Dendritic cell treated with granulocyte-macrophage colony-stimulating factor and Interleukin-4, amounts not matched to agents 40 ng/mL and 50 ng/mL, for 4 days (primary cell): ENCODE measurements at regions of chr11 and their contacts with region 1.

Region 1: DNA sequence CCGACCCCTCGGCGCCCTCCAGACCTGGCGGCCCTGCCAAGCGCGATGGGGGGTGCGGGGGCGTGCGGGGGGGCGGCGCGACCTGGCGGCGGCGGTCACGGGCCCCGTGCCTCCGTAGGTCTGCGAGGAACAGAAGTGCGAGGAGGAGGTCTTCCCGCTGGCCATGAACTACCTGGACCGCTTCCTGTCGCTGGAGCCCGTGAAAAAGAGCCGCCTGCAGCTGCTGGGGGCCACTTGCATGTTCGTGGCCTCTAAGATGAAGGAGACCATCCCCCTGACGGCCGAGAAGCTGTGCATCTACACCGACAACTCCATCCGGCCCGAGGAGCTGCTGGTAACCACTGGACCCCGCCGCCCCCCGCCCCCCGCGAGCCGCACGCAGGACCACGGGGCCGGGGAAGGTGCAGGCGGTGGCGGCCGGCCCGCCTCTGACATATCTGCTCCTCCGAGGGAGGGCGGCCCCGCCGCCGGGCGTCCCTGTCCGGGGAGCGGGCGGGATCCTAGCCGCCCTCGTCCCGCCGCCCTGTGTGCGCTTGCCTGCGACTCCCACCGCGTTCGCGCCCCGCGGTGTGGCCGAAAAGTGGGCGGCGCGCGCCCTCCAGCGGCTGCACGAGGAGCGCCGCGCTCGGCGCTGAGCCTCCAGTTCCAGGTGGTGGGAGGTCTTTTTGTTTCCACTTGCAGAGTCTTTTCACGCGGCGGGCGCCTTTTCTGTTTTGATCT is 2.1 kb downstream of the CCND1 start:
- H3K4me3 Mint-ChIP-seq: peak overlapping the region; percentile 75
- H3K27ac Mint-ChIP-seq: no peak overlapping the region
- H3K4me1 Mint-ChIP-seq: peaks cover 31% of the 10 kb centered on the region
- H3K27me3 Mint-ChIP-seq: peaks cover 72% of the 10 kb centered on the region

Region 2: DNA sequence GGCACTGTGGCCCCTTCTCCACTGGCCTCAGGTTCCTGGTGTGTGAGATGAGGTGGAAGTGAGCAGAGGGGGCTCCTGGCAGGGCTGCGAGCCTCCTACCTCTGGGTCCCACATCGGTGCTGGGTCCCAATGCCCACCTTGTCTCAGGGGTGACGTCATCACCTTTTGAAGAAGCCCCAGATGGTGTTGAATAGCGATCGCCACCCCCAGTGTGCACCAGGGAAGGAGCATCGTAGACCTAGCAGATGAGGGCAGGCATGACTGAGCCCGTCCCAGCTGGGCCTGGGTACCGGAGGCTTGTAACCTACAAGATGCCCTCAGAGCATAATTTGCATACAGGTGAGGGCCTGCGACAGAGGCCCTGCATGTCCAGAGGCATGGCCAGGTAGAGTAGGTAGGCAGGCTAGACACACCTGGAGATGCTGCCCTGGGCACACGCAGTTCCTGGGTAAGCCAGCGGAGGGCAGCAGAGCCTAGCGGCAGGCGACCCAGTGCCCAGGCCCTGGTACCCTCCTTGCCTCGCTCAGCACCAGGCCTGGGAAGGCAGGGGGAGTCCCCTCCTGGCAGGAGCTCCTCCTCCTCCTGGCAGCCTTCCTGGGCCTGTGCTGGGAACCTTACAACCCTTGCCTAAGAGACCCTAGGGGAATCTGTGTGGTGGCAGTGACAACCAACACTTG is 541.8 kb before region 1 on chr11:
- intact Hi-C with region 1: loop called (anchors 1 kb)
- H3K4me3 Mint-ChIP-seq: no peak overlapping the region
- H3K27ac Mint-ChIP-seq: no peak overlapping the region
- H3K4me1 Mint-ChIP-seq: peaks cover 9% of the 10 kb centered on the region
- H3K27me3 Mint-ChIP-seq: peaks cover 40% of the 10 kb centered on the region

Region 3: DNA sequence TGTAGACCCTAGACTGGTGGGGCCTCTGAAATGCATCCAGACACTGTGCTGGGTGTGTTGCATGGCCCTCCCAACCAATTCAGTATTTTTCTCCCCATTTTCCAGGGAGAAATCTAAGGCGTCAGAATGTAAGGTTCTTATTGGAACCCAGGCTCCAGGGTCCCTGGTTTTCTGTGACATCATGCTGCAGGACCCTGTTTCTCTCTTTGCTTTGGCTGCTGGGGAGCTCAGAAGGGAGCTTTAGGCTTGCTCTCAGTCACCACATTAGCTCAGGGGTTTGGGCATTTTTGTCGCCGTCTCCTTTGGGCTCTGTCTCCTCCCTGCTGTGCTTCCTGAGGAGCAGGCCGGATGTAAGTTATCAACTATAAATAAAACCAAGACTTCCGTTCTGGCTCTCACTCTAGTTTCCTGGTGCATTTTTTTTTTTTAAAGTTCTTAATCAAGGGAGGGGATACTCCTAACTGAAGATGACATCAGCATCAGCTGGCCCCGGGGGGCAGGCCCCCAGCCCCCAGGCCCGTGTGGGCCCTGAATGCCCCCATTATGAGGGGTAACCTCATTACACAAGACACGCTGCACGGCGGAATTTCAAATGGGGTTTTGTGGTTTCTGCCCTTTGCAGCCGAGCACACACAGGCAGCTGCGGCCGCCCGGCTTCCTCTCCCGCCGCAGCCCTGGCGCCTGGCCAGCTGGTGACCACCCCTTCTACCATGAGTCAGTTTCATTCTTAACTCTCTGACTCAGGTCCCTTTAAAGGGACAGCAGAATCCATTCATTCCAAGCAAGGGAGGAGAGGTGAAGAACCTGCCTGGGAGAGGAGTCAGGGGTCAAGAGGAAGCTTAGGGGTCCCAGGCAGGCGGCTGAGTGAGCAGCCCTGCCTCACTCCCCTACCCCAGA is 345.9 kb before region 1 on chr11:
- intact Hi-C with region 1: loop called (anchors 1 kb)
- H3K4me3 Mint-ChIP-seq: peak overlapping the region; percentile 71
- H3K27ac Mint-ChIP-seq: peak overlapping the region; percentile 86
- H3K4me1 Mint-ChIP-seq: peaks cover 79% of the 10 kb centered on the region
- H3K27me3 Mint-ChIP-seq: peaks cover 43% of the 10 kb centered on the region

Region 4: GRCh38 chr11:69443138-69443967 is 199.7 kb before region 1 on chr11:
- intact Hi-C with region 1: loop called (anchors 10 kb)
- H3K4me3 Mint-ChIP-seq: peak overlapping the region; percentile 57
- H3K27ac Mint-ChIP-seq: peak overlapping the region; percentile 87
- H3K4me1 Mint-ChIP-seq: peaks cover 63% of the 10 kb centered on the region
- H3K27me3 Mint-ChIP-seq: peaks cover 68% of the 10 kb centered on the region

Region 5: DNA sequence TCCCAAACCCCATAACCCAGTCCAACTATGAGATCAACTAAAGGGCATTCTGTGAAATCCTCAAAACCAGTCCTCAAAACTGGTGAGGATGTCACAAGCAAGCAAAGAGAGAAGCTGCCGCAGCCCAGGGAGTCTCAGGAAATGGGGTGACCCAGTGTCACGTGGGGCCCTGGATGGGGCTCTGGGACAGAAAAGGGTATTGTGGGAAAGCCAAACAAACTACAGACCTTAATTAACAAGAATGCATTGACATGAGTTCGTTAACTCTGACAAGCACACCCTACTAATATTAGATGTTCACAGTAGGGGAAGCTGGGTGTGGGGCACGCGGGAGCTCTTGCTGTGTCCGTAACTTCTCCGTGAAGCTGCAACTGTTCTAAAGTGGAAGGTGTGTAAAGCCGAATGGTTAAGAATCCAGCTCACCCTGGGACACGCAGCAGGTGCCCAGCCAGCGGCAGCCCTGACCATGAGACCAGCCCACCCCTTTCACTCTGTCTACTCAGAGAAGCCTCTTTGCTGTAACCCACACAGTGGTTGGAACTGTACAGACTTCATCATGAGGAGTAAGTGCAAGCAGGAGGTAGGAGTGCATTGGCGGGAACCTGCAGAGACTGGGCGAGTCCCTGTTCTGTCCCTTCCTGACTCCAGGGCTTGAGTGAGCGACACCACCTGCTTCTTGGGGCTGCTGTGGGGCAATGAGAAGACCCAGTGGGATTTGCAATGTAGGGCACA is 143.7 kb before region 1 on chr11:
- intact Hi-C with region 1: no loop called
- H3K4me3 Mint-ChIP-seq: no peak overlapping the region
- H3K27ac Mint-ChIP-seq: no peak overlapping the region
- H3K4me1 Mint-ChIP-seq: peaks cover 11% of the 10 kb centered on the region
- H3K27me3 Mint-ChIP-seq: peaks cover 30% of the 10 kb centered on the region

Region 6: GRCh38 chr11:69540118-69540502 is 103.0 kb before region 1 on chr11:
- intact Hi-C with region 1: loop called (anchors 10 kb)
- H3K4me3 Mint-ChIP-seq: no peak overlapping the region
- H3K27ac Mint-ChIP-seq: peak overlapping the region; percentile 93
- H3K4me1 Mint-ChIP-seq: peaks cover 45% of the 10 kb centered on the region
- H3K27me3 Mint-ChIP-seq: peaks cover 12% of the 10 kb centered on the region